Common myeloid progenitor, CD34-positive (primary cell): ENCODE measurements at regions of chrX and their contacts with region 1.

Region 1: GRCh38 chrX:49165901-49166881 is 3.6 kb downstream of the MAGIX start:
- DNase-seq: peak; percentile 85 to 94 (median 91)
- H3K4me3 ChIP-seq: peak overlapping the region; percentile 25 to 69 (median 51)
- H3K27ac ChIP-seq: peak overlapping the region; percentile 74 to 92
- H3K4me1 ChIP-seq: peaks cover 6 to 60% (median 40%) of the 10 kb centered on the region in 4 experiments
- H3K27me3 ChIP-seq: no peaks in the 10 kb centered on the region

Region 2: GRCh38 chrX:49155900-49156837 is 10.0 kb before region 1 on chrX:
- CTCF ChIA-PET with region 1: interaction called, 27 read pairs
- POLR2A ChIA-PET with region 1: interaction called, 10 read pairs
- DNase-seq: peak; percentile 83 to 91 (median 87)
- H3K4me3 ChIP-seq: peak overlapping the region; percentile 14 to 79 (median 55)
- H3K27ac ChIP-seq: peak overlapping the region; percentile 64 to 85
- H3K4me1 ChIP-seq: peaks cover 2 to 17% (median 12%) of the 10 kb centered on the region in 4 experiments
- H3K27me3 ChIP-seq: no peaks in the 10 kb centered on the region

Region 3: DNA sequence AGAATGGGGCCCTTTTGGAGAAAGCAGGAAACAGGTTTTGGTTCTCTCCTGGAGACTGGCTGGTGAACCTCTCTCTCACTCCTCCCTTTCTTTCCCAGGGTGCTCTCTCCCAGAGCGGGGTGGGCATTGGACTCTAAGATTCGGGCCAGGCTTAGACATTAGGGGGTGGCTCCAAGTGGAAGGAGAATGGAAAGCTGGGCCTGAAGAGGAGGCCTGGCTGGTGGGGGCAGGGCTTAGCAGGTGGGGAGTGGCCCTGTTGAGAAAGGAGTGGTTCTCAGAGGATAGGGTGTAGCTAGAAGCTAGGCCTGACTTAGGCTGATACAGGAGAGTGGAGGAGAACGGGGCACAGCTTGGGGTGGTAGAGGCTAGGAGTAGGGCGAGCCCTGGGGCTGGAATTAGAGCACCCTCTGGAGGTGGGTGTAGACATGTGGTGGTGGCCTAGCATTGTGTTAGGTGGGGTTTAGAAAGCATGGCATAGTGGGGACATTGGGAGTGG is 11.2 kb after region 1 on chrX:
- CTCF ChIA-PET with region 1: interaction called, 12 read pairs
- POLR2A ChIA-PET with region 1: interaction called, 7 read pairs
- DNase-seq: peak; percentile 54 to 73 (median 72)
- H3K4me3 ChIP-seq: no peak overlapping the region
- H3K27ac ChIP-seq: no peak overlapping the region
- H3K4me1 ChIP-seq: peaks cover 3 to 37% (median 22%) of the 10 kb centered on the region in 4 experiments
- H3K27me3 ChIP-seq: no peaks in the 10 kb centered on the region